HepG2 (cell line): ENCODE measurements at regions of chr13 and their contacts with region 1.

Region 1: DNA sequence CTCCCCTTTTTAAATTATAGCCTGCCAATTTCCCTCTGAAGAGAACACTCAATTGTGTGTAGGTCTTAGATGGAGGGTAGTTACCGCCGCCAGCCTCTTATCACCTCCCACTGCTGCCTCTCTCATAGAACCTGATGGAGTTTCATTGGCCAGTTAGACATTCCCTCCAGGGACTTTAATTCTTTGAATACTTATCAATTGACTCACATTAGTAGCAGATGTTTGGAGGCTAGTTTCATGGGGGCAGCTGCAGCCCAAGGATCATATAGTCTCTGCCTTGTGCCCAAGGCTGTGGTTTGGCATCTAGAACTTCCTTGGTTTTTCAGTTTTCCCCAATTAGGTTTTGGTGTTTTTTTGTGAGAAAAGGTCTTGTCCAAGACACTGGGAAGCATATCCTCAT is 318.9 kb upstream of the HTR2A start:
- DNase-seq: no peak
- ATAC-seq: no peak
- H3K4me3 ChIP-seq: no peak overlapping the region
- H3K27ac ChIP-seq: no peak overlapping the region
- H3K4me1 ChIP-seq: 0 out of 2 replicates have a peak, but pooled peaks cover 11% of the 10 kb centered on the region
- H3K27me3 ChIP-seq: no peaks in the 10 kb centered on the region
- CTCF ChIP-seq: no peak
- EP300 ChIP-seq: no peak
- POLR2A ChIP-seq: no peak
- RAD21 ChIP-seq: no peak

Region 2: DNA sequence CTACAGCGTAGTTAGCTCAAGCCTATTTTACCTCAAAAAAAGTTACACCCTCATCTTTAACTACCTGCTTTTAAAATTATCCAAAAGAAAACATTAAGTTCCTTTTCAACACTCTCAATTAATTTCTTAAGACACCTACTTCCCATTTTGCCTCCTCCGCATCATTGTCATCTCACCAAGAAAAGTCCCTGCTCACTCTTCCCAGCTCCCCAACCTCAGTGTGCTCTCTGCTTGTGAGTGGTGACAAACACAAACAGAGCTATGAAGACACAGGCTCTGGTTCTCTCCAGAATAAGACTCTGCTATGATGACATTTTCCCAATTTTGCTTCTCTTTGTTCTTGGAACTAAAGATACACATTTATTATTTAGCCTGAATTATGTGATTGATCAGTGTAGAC is 66.2 kb after region 1 on chr13:
- CTCF ChIA-PET with region 1: no interaction called
- POLR2A ChIA-PET with region 1: no interaction called
- in situ Hi-C with region 1: no loop called
- intact Hi-C with region 1: loop called (anchors 2 kb)
- DNase-seq: no peak
- ATAC-seq: no peak
- H3K4me3 ChIP-seq: no peak overlapping the region
- H3K27ac ChIP-seq: no peak overlapping the region
- H3K4me1 ChIP-seq: no peaks in the 10 kb centered on the region
- H3K27me3 ChIP-seq: no peaks in the 10 kb centered on the region
- CTCF ChIP-seq: no peak
- EP300 ChIP-seq: no peak
- POLR2A ChIP-seq: no peak
- RAD21 ChIP-seq: no peak